ENCODE measurements at regions of chr7 and their contacts with region 1.

Region 1: GRCh38 chr7:132500727-132501440 is 75.4 kb downstream of the PLXNA4 start:
- DNase-seq: peak; percentile 55 to 77
- ATAC-seq: peak; percentile 72 to 90 (median 84)
- H3K4me3 ChIP-seq: no peak overlapping the region
- H3K27ac ChIP-seq: peak overlapping the region in 2 of 10 donors; percentile 4 to 16
- H3K4me1 ChIP-seq: peaks cover 6 to 32% (median 17%) of the 10 kb centered on the region in 9 donors
- H3K27me3 ChIP-seq: no peaks in the 10 kb centered on the region
- CTCF ChIP-seq: peak in 8 of 9 donors; percentile 40 to 69 (median 52)

Region 2: GRCh38 chr7:132311733-132312132 is 189.2 kb before region 1 on chr7:
- intact Hi-C with region 1: loop called in 4 of 10 experiments (anchors 5 to 10 kb)
- DNase-seq: no peak
- ATAC-seq: no peak
- H3K4me3 ChIP-seq: no peak overlapping the region
- H3K27ac ChIP-seq: no peak overlapping the region
- H3K4me1 ChIP-seq: no peaks in the 10 kb centered on the region
- H3K27me3 ChIP-seq: no peaks in the 10 kb centered on the region
- CTCF ChIP-seq: no peak

Region 3: GRCh38 chr7:132328047-132328620 is 172.8 kb before region 1 on chr7:
- intact Hi-C with region 1: loop called in 5 of 10 experiments (anchors 5 to 10 kb)
- DNase-seq: peak; percentile 17 to 20
- ATAC-seq: peak; percentile 32 to 90 (median 82)
- H3K4me3 ChIP-seq: no peak overlapping the region
- H3K27ac ChIP-seq: peak overlapping the region in 7 of 10 donors; percentile 11 to 64 (median 50)
- H3K4me1 ChIP-seq: peaks cover 0 to 29% (median 8%) of the 10 kb centered on the region in 9 donors
- H3K27me3 ChIP-seq: no peaks in the 10 kb centered on the region
- CTCF ChIP-seq: no peak

Measured in heart right ventricle (tissue), 16 donors.